HEK293 (cell line): ENCODE measurements at regions of chr1 and their contacts with region 1.

Region 1: DNA sequence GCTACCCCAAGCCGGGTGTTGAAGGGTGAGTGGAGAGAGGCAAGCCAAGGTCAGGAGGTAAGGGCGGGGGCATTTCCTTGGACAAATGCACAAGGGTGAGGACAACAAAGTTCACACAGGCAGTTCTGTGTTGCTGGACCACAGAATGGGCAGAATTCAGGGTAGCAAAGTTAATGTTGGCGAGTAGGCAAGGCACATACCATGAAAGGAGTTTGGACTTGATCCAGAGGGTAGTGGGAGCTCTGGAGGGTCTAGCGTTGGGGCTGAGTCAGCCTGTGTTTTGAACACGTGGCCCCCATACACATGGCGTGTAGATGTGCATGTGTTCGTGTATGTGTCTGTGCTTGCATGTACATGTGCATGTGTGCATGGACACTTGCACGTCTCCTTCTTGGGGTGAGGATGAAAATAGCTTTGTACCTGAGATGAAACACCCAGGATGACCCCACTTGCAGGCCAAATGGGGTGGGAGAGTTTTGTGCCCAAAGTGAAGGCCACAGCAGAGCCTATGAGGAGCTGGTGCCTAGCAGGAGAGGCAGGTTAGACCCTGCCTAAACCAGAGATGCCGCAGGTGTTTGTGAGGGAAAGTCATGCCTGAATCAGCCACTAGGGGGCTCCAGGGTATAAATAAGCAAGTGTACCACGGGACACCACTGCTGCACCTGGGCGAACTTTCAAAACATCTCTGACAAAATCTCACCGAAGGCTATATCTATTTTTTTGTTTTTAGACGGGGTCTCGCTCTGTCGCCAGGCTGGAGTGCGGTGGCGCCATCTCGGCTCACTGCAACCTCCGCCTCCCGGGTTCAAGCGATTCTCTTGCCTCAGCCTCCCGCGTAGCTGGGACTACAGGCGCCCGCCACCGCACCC is 21.8 kb downstream of the SLC27A3 start:
- H3K4me3 ChIP-seq: no peak overlapping the region
- H3K27ac ChIP-seq: no peak overlapping the region
- H3K4me1 ChIP-seq: no peaks in the 10 kb centered on the region
- CTCF ChIP-seq: peak; percentile 78

Region 2: GRCh38 chr1:153749408-153750005 is 47.5 kb before region 1 on chr1:
- CTCF ChIA-PET with region 1: no interaction called
- POLR2A ChIA-PET with region 1: no interaction called
- H3K4me3 ChIP-seq: no peak overlapping the region
- H3K27ac ChIP-seq: no peak overlapping the region
- H3K4me1 ChIP-seq: no peaks in the 10 kb centered on the region
- CTCF ChIP-seq: peak; percentile 82

Region 3: GRCh38 chr1:153816283-153816889 is 19.4 kb after region 1 on chr1:
- CTCF ChIA-PET with region 1: interaction called, 11 read pairs
- POLR2A ChIA-PET with region 1: no interaction called
- H3K4me3 ChIP-seq: no peak overlapping the region
- H3K27ac ChIP-seq: no peak overlapping the region
- H3K4me1 ChIP-seq: no peaks in the 10 kb centered on the region
- CTCF ChIP-seq: no peak